HEK293 (cell line): ENCODE measurements at regions of chr6 and their contacts with region 1.

Region 1: DNA sequence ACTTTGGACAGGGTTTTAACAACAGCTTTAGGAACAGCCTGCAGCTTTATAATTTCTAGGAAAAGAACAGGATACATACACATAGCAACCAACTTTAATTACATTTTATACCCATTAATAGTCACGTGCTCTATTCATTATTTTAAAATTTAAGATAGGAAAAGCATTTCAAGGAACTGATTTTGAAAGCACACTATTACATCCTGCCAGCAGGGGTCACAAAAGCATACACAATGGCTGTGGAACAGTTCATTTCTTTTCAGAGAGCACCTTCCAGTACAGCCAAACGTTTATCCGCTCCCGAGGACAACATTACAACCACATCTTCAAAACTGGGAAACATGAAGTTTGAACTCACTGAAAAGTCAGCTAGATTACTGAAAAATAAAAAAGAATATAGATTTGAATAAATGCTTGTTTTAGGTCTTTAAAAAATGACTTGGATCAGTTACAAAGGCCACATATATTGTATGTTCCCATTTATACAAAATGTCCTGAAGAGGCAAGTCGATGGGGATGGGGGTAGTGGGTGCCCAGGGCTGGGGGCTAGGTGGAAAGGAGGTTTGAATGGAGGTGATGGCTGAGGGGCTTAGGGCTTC is 104.6 kb upstream of the EXOC2 start:
- H3K4me3 ChIP-seq: no peak overlapping the region
- H3K27ac ChIP-seq: no peak overlapping the region
- H3K4me1 ChIP-seq: no peaks in the 10 kb centered on the region
- CTCF ChIP-seq: peak; percentile 33; the same call in 1 of the 2 replicates

Region 2: DNA sequence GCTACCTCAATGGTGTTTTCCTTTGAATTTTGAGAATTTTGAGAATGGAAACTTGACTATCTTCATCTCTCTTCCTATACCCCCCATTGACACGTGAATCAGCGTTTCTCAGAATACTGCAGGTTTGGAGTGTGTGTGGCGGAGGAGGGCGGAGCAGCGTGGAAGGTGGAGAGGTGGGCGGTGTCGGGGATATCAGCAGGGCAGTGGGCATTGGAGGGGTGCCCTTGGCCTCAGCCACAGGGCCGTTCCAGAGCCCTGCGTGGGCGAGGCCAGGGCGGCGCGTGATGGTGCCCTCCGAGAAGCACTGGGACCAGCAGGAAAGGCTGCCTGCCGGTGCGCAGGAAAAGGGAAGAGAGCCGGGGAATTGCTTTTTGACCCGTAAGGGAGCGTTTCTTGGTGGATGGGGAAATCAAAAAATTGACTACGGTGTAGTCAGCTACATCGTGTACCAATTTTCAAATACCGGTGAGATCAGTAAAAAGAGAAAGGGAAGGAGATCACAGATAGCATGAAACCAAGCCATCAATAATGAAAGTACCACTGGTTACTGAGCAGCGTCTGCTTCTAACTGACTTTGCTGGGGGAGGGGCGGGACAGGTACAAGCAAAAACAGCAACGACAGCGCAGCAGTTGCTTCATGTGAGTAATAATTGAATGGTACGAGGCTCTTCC is 588.0 kb before region 1 on chr6:
- CTCF ChIA-PET with region 1: no interaction called
- POLR2A ChIA-PET with region 1: no interaction called
- H3K4me3 ChIP-seq: no peak overlapping the region
- H3K27ac ChIP-seq: no peak overlapping the region
- H3K4me1 ChIP-seq: no peaks in the 10 kb centered on the region
- CTCF ChIP-seq: no peak

Region 3: GRCh38 chr6:593139-593906 is 204.3 kb before region 1 on chr6:
- CTCF ChIA-PET with region 1: interaction called, 21 read pairs
- POLR2A ChIA-PET with region 1: no interaction called
- H3K4me3 ChIP-seq: no peak overlapping the region
- H3K27ac ChIP-seq: no peak overlapping the region
- H3K4me1 ChIP-seq: no peaks in the 10 kb centered on the region; the same call in 1 of the 2 replicates
- CTCF ChIP-seq: no peak

Region 4: GRCh38 chr6:650098-650497 is 147.5 kb before region 1 on chr6:
- CTCF ChIA-PET with region 1: no interaction called
- POLR2A ChIA-PET with region 1: no interaction called
- H3K4me3 ChIP-seq: no peak overlapping the region
- H3K27ac ChIP-seq: no peak overlapping the region
- H3K4me1 ChIP-seq: peaks cover 22% of the 10 kb centered on the region
- CTCF ChIP-seq: no peak

Region 5: DNA sequence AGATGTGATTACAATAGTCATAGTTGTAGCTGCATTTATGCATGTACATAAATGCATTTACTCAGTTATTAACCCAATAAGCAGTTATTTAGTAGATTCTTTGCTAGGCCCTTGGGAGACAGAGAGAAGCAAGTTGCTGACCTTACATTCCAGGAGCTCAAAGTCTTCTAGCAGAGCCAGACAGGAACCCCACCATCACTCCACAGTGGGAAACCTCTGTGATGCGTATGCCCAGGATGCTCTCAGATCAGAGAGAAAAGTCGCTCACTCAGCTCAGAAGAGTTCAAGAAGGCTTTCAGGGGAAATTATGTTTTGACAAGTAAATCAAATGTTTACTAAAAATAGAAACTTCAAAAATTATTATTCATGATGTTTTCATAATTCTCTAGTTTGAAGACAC is 41.6 kb after region 1 on chr6:
- CTCF ChIA-PET with region 1: interaction called, 10 read pairs
- POLR2A ChIA-PET with region 1: no interaction called
- H3K4me3 ChIP-seq: no peak overlapping the region
- H3K27ac ChIP-seq: no peak overlapping the region
- H3K4me1 ChIP-seq: peaks cover 18% of the 10 kb centered on the region
- CTCF ChIP-seq: no peak

Region 6: GRCh38 chr6:912871-913835 is 115.6 kb after region 1 on chr6:
- CTCF ChIA-PET with region 1: interaction called, 10 read pairs
- POLR2A ChIA-PET with region 1: interaction called, 3 read pairs
- H3K4me3 ChIP-seq: no peak overlapping the region
- H3K27ac ChIP-seq: no peak overlapping the region
- H3K4me1 ChIP-seq: 0 out of 2 replicates have a peak, but pooled peaks cover 3% of the 10 kb centered on the region
- CTCF ChIP-seq: peak; percentile 26; the same call in 1 of the 2 replicates

Region 7: DNA sequence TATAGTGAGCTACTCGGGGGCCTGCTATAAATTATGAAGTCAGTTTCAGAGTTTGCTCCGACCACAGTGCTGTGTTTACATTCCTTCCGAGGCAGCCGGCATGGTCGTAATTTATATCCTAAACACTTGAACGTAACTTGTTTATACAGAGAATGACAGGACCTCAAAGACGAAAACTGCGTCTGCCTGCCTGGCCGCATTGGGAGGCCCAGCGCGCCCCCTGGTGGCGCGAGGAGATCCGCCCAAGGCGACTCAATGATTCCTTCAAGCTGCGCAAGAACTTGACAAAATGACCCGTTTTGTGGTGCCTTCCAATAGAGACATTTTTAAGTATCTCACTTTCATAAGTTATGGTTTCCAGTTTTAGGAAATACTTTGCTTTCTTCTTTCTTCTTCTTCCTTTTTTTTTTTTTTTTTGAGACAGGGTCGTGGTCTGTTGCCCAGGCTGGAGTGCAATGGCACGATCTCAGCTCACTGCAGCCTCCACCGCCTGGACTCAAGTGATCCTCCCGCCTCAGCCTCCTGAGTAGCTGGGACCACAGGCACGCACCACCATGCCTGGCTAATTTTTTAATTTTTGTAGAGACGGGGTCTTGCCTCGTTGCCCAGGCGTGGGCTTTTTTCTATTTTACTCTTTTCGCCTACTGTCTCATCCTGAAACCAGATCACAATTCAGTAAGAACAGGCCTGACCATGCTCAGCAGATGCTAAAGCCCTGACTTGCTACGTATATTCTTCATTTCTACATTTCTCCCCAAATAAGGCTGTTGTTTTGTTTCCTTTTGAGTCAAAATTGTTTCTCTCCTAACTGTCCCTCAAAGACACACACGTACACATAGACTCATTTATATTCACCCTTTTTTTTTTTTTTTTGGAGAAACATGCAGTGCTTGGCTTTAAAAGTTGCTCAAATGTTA is 599.6 kb after region 1 on chr6:
- CTCF ChIA-PET with region 1: interaction called, 19 read pairs
- POLR2A ChIA-PET with region 1: interaction called, 4 read pairs
- H3K4me3 ChIP-seq: no peak overlapping the region
- H3K27ac ChIP-seq: no peak overlapping the region
- H3K4me1 ChIP-seq: peaks cover 12% of the 10 kb centered on the region
- CTCF ChIP-seq: peak; percentile 90